ENCODE measurements at regions of chrX and their contacts with region 1.

Region 1: DNA sequence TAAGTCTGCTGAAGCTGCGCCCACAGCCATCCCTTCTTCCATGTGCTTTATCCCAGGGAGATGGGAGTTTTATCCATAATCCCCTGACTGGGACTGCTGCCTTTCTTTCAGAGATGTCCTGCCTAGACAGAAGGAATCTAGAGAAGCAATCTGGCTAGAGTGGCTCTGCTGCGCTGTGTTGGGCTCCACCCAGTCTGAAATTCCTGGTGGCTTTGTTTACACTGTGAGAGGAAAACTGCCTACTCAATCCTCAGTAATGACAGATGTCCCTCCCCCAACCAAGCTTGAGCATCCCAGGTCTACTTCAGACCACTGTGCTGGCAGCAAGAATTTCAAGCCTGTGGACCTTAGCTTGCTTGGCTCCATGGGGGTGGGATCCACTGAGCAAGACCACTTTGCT is 116.9 kb upstream of the AR start:
- DNase-seq: no peak
- H3K4me3 ChIP-seq: no peak overlapping the region
- H3K27ac ChIP-seq: no peak overlapping the region
- H3K4me1 ChIP-seq: no peaks in the 10 kb centered on the region
- H3K27me3 ChIP-seq: peaks cover 0 to 10% of the 10 kb centered on the region in 2 donors
- CTCF ChIP-seq: no peak
- POLR2A ChIP-seq: no peak

Region 2: DNA sequence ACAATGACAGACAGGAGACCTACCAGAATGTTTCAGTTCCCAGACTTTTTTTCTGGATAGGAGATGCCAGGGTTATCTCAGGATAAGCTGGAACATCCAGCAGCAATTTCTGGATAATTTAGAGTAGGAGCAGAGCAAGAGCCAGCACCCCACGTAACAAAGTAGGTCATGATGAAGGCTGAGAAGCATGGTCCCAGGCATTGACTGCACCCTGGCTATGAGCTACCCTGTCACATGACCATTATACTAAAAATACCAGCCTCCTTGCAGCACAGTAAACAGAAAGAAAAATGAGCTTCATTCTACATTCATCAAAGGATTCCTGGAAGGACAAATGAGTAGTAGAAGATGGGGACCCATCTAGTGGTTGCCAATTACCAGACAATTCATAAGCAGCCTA is 130.5 kb before region 1 on chrX:
- intact Hi-C with region 1: loop called (anchors 10 kb)
- DNase-seq: no peak
- H3K4me3 ChIP-seq: no peak overlapping the region
- H3K27ac ChIP-seq: no peak overlapping the region
- H3K4me1 ChIP-seq: no peaks in the 10 kb centered on the region
- H3K27me3 ChIP-seq: peaks cover 0 to 18% of the 10 kb centered on the region in 2 donors
- CTCF ChIP-seq: no peak
- POLR2A ChIP-seq: no peak

Region 3: DNA sequence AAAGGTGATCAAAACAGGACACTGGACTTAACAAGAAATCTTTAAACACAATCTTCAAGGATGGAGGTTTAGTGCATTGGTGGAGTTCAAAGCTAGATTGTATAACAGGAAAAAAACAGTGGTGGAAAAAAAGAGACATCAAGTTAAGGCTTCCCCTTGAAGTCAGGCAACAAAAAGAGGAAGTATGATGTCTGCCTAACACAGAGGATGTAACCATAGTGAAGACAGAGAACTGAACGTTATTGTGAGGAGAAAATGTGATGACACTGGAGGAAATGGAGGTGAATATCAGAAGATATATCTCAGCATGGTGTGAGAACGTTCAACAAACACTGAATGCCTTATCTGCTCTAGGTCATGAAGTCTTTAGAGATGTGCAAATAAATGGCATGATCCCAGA is 75.5 kb before region 1 on chrX:
- intact Hi-C with region 1: no loop called
- DNase-seq: no peak
- H3K4me3 ChIP-seq: no peak overlapping the region
- H3K27ac ChIP-seq: no peak overlapping the region
- H3K4me1 ChIP-seq: no peaks in the 10 kb centered on the region
- H3K27me3 ChIP-seq: peaks cover 0 to 35% of the 10 kb centered on the region in 2 donors
- CTCF ChIP-seq: no peak
- POLR2A ChIP-seq: no peak

Region 4: DNA sequence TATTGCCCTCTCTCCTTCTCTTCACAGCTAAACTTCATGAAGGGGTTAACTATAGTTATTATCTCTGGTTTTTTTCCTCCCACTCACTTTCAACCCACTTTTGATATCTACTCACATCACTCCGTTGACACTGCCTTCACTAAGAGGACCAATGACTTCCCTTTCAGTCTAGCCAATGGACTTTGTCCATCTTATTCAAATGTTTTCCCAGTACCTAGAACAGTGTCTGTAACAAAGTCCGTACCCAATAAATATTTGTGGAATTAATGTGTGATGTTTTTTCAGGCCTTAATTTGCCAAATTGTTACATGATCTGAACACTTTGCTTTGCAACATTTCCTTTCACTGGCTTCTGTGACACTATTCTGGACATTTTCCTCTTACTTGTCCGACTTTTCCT is 10.9 kb after region 1 on chrX:
- intact Hi-C with region 1: no loop called
- DNase-seq: no peak
- H3K4me3 ChIP-seq: no peak overlapping the region
- H3K27ac ChIP-seq: no peak overlapping the region
- H3K4me1 ChIP-seq: no peaks in the 10 kb centered on the region
- H3K27me3 ChIP-seq: peaks cover 0 to 5% of the 10 kb centered on the region in 2 donors
- CTCF ChIP-seq: no peak
- POLR2A ChIP-seq: no peak